ENCODE measurements at regions of chr16 and their contacts with region 1.

Region 1: GRCh38 chr16:4957720-4958509 is at the start of gene SEC14L5:
- ATAC-seq: peak; percentile 83 to 93 (median 92)
- H3K4me3 ChIP-seq: peak within 1 kb of the TSS; percentile 45 to 60 (median 54)
- H3K27ac ChIP-seq: no peak within 1 kb of the TSS
- H3K4me1 ChIP-seq: peaks cover 0 to 5% of the 10 kb centered on the region in 2 donors
- total RNA-seq, gene SEC14L5: 0.04 to 2.0 (median 1.0) TPM

Region 2: DNA sequence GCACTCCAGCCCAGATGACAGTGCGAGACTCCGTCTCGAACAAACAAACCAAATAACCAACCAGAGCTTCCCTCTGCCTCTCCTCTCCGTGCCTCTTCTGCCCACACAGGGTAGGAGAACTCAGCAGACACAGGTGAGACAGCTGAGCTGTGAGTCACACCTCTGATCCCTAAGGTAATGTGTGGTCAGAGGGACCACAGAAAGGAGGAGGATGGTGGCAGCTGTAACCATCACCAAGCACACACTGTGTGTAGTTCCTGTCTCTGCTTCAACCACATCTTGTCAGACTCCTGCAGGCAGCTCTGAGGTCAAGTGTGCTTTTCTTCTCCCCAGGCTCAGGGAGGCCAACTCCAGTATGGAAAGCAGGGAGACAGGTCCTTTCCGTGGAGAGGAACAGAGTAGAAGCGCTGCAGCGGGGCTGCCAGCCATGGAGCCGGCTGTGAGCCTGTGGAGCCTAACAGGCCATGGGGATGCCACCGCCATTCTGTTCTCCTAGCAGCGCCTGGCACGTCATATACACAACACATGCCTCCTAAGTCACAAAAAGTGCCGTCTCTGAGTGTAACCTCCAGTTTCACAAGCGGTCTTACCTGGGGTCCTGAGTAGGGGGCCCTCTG is 257.4 kb before region 1 on chr16:
- in situ Hi-C with region 1: loop called in 1 of 9 experiments (anchors 25 kb)
- ATAC-seq: no peak
- H3K4me3 ChIP-seq: no peak overlapping the region
- H3K27ac ChIP-seq: no peak overlapping the region
- H3K4me1 ChIP-seq: peaks cover 5 to 8% of the 10 kb centered on the region in 2 donors

Region 3: DNA sequence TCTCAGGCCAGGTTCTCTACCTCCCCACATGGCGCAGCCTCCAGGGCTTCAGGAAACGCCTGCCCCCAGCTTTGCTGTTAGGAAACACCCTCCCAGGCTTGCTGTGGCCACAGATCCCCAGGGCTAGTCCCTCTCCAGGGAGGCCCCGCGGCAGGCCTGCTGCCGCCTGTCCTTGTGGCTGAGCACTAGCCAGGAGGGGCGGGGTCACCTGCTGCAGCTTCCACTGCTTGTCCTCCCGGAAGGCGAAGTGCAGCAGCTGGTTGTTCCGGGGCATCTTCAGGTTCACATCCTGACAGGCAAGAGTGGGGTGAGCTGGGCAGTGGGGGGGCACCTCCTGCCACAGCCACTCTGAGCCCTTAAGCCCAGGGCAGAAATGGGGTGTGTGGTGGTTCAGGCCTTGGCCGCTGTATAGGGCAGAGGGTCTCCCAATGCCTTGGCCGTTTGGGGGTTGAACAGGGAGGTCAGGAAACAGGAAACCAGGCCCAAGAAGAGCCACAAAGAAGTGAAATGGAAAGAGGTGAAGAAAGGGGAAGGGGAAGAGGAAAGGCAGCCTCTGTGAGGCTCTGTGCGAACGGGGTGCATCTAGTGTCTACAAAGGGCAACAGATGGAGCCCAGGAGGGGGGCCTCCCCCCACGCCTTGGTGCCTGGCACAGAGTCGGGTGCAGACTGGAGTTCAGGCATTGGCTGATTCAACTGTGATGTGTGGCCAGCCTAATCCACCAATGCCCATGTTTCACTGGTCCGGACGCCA is 157.4 kb before region 1 on chr16:
- in situ Hi-C with region 1: no loop called
- ATAC-seq: peak in 1 of 8 experiments; percentile 4
- H3K4me3 ChIP-seq: no peak overlapping the region
- H3K27ac ChIP-seq: no peak overlapping the region
- H3K4me1 ChIP-seq: peaks cover 9% of the 10 kb centered on the region in 2 donors

Measured in motor neuron (in vitro differentiated cells).